ENCODE measurements at regions of chr1 and their contacts with region 1.

Region 1: DNA sequence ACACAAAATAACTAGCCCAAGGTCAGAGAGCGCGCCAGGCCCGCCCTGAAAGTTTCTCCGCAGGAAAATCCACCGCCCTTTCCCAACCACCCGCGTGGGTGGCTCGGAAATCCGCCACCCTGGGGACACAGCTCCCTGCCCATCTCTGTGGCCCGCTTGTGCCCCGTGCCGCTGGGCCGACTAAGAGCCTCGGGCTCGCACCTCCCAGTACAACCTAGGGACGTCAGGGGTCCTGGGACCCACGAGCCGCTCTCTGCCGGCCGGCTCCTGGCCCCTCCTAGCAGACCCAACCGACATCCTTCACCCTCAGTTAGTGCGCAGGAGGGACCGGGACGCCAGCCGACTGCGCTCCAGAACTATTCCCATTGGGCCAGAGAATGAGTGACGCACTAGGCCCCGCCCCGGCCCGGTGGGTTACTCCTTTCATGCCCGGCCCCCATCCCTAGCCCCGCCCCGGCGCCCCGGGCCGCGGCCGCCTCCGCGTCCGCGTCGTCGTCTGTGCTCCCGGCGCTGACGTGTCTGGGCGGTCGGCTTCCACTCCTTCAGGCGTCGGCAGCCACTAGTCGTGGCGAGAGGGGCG is 395 bp upstream of the UAP1 start:
- DNase-seq: peak; percentile 94 to 99 (median 98)
- ATAC-seq: peak; percentile 93
- H3K4me3 ChIP-seq: peak overlapping the region; percentile 70
- H3K4me3 Mint-ChIP-seq: peak overlapping the region; percentile 97
- H3K27ac ChIP-seq: peak overlapping the region; percentile 85 to 88
- H3K27ac Mint-ChIP-seq: peak overlapping the region; percentile 100
- H3K4me1 ChIP-seq: peaks cover 15% of the 10 kb centered on the region
- H3K4me1 Mint-ChIP-seq: peaks cover 54% of the 10 kb centered on the region
- H3K27me3 ChIP-seq: no peaks in the 10 kb centered on the region
- H3K27me3 Mint-ChIP-seq: no peaks in the 10 kb centered on the region
- CTCF ChIP-seq: no peak

Region 2: GRCh38 chr1:161766102-161766981 is 794.8 kb before region 1 on chr1 and contains the start of gene ATF6:
- CTCF ChIA-PET with region 1: no interaction called
- POLR2A ChIA-PET with region 1: no interaction called
- intact Hi-C with region 1: loop called in 1 of 2 experiments (anchors 10 kb)
- DNase-seq: peak; percentile 66 to 90 (median 74)
- ATAC-seq: peak; percentile 69
- H3K4me3 ChIP-seq: peak within 1 kb of the TSS; percentile 70
- H3K4me3 Mint-ChIP-seq: peak within 1 kb of the TSS; percentile 99
- H3K27ac ChIP-seq: peak within 1 kb of the TSS; percentile 76 to 86
- H3K27ac Mint-ChIP-seq: no peak within 1 kb of the TSS
- H3K4me1 ChIP-seq: peaks cover 29% of the 10 kb centered on the region
- H3K4me1 Mint-ChIP-seq: peaks cover 40% of the 10 kb centered on the region
- H3K27me3 ChIP-seq: no peaks in the 10 kb centered on the region
- H3K27me3 Mint-ChIP-seq: no peaks in the 10 kb centered on the region
- CTCF ChIP-seq: no peak
- total RNA-seq, gene ATF6: 16.2 to 17.1 TPM

Region 3: GRCh38 chr1:162444903-162445302 is 116.2 kb before region 1 on chr1:
- CTCF ChIA-PET with region 1: no interaction called
- POLR2A ChIA-PET with region 1: no interaction called
- intact Hi-C with region 1: no loop called
- DNase-seq: no peak
- ATAC-seq: no peak
- H3K4me3 ChIP-seq: no peak overlapping the region
- H3K4me3 Mint-ChIP-seq: no peak overlapping the region
- H3K27ac ChIP-seq: no peak overlapping the region
- H3K27ac Mint-ChIP-seq: no peak overlapping the region
- H3K4me1 ChIP-seq: no peaks in the 10 kb centered on the region
- H3K4me1 Mint-ChIP-seq: no peaks in the 10 kb centered on the region
- H3K27me3 ChIP-seq: peaks cover 9 to 23% of the 10 kb centered on the region in 2 experiments
- H3K27me3 Mint-ChIP-seq: peaks cover 75% of the 10 kb centered on the region
- CTCF ChIP-seq: no peak

Region 4: DNA sequence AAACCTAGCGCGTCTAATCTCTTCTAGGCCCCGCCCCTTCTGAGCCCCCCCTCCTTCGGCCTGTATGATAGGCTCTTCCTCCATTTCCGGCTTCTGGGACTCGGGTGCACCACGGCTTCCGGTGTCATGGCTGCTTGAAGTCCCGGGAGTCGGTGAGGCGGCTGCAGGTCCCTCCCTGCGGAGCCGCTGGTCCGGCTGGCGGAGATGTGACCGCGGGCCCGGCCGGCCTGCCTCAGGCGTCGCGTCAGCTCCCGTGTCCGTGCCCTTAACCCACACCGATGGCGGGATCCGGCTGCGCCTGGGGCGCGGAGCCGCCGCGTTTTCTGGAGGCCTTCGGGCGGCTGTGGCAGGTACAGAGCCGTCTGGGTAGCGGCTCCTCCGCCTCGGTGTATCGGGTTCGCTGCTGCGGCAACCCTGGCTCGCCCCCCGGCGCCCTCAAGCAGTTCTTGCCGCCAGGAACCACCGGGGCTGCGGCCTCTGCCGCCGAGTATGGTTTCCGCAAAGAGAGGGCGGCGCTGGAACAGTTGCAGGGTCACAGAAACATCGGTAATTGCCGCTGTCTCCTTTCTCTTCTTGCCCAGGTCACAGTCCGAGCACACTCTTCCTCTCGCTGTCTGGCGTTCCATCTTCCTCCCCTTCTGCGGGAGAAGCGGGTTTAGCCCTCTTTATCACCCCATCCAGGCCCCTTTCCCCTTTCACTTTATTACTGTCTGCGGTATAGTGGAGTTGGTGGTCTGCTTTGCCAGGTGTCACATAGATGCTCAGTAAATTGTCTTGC is 63.2 kb before region 1 on chr1 and contains the start of gene UHMK1:
- CTCF ChIA-PET with region 1: no interaction called
- POLR2A ChIA-PET with region 1: no interaction called
- intact Hi-C with region 1: loop called (anchors 1 kb)
- DNase-seq: peak; percentile 81 to 96 (median 87)
- ATAC-seq: peak; percentile 97
- H3K4me3 ChIP-seq: peak within 1 kb of the TSS; percentile 92
- H3K4me3 Mint-ChIP-seq: peak within 1 kb of the TSS; percentile 92
- H3K27ac ChIP-seq: peak within 1 kb of the TSS; percentile 29 to 79
- H3K27ac Mint-ChIP-seq: peak within 1 kb of the TSS; percentile 86
- H3K4me1 ChIP-seq: peaks cover 17% of the 10 kb centered on the region
- H3K4me1 Mint-ChIP-seq: peaks cover 40% of the 10 kb centered on the region
- H3K27me3 ChIP-seq: no peaks in the 10 kb centered on the region
- H3K27me3 Mint-ChIP-seq: no peaks in the 10 kb centered on the region
- CTCF ChIP-seq: no peak
- total RNA-seq, gene UHMK1: 47.3 to 47.6 TPM

Region 5: GRCh38 chr1:162538815-162539431 is 22.2 kb before region 1 on chr1:
- CTCF ChIA-PET with region 1: no interaction called
- POLR2A ChIA-PET with region 1: no interaction called
- intact Hi-C with region 1: no loop called
- DNase-seq: no peak
- ATAC-seq: no peak
- H3K4me3 ChIP-seq: no peak overlapping the region
- H3K4me3 Mint-ChIP-seq: no peak overlapping the region
- H3K27ac ChIP-seq: no peak overlapping the region
- H3K27ac Mint-ChIP-seq: no peak overlapping the region
- H3K4me1 ChIP-seq: no peaks in the 10 kb centered on the region
- H3K4me1 Mint-ChIP-seq: no peaks in the 10 kb centered on the region
- H3K27me3 ChIP-seq: no peaks in the 10 kb centered on the region
- H3K27me3 Mint-ChIP-seq: no peaks in the 10 kb centered on the region
- CTCF ChIP-seq: no peak

Region 6: GRCh38 chr1:162782671-162783070 is 221.5 kb after region 1 on chr1:
- CTCF ChIA-PET with region 1: no interaction called
- POLR2A ChIA-PET with region 1: no interaction called
- intact Hi-C with region 1: loop called in 1 of 2 experiments (anchors 10 kb)
- DNase-seq: no peak
- ATAC-seq: no peak
- H3K4me3 ChIP-seq: no peak overlapping the region
- H3K4me3 Mint-ChIP-seq: no peak overlapping the region
- H3K27ac ChIP-seq: no peak overlapping the region
- H3K27ac Mint-ChIP-seq: no peak overlapping the region
- H3K4me1 ChIP-seq: no peaks in the 10 kb centered on the region
- H3K4me1 Mint-ChIP-seq: no peaks in the 10 kb centered on the region
- H3K27me3 ChIP-seq: peaks cover 0 to 8% of the 10 kb centered on the region in 2 experiments
- H3K27me3 Mint-ChIP-seq: peaks cover 15% of the 10 kb centered on the region
- CTCF ChIP-seq: no peak

Region 7: GRCh38 chr1:163315773-163316374 is 754.7 kb after region 1 on chr1:
- CTCF ChIA-PET with region 1: no interaction called
- POLR2A ChIA-PET with region 1: no interaction called
- intact Hi-C with region 1: loop called (anchors 5 kb)
- DNase-seq: peak in 12 of 14 experiments; percentile 6 to 71 (median 26)
- ATAC-seq: no peak
- H3K4me3 ChIP-seq: no peak overlapping the region
- H3K4me3 Mint-ChIP-seq: no peak overlapping the region
- H3K27ac ChIP-seq: no peak overlapping the region
- H3K27ac Mint-ChIP-seq: no peak overlapping the region
- H3K4me1 ChIP-seq: peaks cover 2% of the 10 kb centered on the region
- H3K4me1 Mint-ChIP-seq: peaks cover 4% of the 10 kb centered on the region
- H3K27me3 ChIP-seq: no peaks in the 10 kb centered on the region
- H3K27me3 Mint-ChIP-seq: no peaks in the 10 kb centered on the region
- CTCF ChIP-seq: peak; percentile 68

Region 8: DNA sequence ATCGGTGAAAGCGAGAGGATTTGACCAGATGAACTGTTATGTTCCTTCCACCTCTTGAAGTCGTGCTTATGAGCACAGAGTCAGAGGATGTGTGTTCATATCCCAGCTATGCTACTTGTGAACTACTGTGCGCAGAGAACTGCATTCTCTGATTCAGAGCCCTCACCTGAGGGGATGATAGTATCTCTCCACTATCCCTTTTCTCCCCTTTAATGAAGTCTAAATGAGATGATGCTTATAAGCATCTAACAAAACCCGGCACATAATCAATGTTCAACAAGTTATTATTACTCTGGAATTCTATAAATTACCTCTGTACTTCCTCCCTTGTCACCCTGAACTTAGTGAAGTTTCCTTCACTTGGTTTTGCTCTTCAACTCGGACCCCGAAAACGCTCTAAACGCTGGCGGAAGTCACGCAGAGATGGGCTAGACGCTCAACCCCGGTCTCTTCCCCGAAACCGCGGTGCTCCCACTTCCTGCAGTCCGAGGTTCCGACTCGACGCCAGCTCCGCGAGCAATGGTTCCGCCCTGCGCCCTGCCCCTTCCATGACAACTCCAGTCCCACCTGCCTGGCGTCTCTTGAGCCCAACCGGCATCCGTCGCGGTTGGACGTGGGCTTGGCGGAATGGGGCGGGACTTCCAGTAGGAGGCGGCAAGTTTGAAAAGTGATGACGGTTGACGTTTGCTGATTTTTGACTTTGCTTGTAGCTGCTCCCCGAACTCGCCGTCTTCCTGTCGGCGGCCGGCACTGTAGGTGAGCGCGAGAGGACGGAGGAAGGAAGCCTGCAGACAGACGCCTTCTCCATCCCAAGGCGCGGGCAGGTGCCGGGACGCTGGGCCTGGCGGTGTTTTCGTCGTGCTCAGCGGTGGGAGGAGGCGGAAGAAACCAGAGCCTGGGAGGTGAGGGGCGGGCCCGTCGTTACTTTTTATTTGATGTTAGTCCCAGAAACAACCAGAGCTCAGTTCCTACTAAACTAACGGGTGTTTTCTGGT is 760.5 kb after region 1 on chr1 and contains the start of gene NUF2:
- CTCF ChIA-PET with region 1: no interaction called
- POLR2A ChIA-PET with region 1: interaction called, 3 read pairs
- intact Hi-C with region 1: loop called (anchors 5 kb)
- DNase-seq: peak; percentile 93 to 98 (median 96)
- ATAC-seq: peak; percentile 96
- H3K4me3 ChIP-seq: peak within 1 kb of the TSS; percentile 74
- H3K4me3 Mint-ChIP-seq: peak within 1 kb of the TSS; percentile 84
- H3K27ac ChIP-seq: peak within 1 kb of the TSS; percentile 53 to 55
- H3K27ac Mint-ChIP-seq: peak within 1 kb of the TSS; percentile 86
- H3K4me1 ChIP-seq: peaks cover 6% of the 10 kb centered on the region
- H3K4me1 Mint-ChIP-seq: peaks cover 23% of the 10 kb centered on the region
- H3K27me3 ChIP-seq: no peaks in the 10 kb centered on the region
- H3K27me3 Mint-ChIP-seq: no peaks in the 10 kb centered on the region
- CTCF ChIP-seq: no peak
- total RNA-seq, gene NUF2: 1.8 TPM

Region 9: DNA sequence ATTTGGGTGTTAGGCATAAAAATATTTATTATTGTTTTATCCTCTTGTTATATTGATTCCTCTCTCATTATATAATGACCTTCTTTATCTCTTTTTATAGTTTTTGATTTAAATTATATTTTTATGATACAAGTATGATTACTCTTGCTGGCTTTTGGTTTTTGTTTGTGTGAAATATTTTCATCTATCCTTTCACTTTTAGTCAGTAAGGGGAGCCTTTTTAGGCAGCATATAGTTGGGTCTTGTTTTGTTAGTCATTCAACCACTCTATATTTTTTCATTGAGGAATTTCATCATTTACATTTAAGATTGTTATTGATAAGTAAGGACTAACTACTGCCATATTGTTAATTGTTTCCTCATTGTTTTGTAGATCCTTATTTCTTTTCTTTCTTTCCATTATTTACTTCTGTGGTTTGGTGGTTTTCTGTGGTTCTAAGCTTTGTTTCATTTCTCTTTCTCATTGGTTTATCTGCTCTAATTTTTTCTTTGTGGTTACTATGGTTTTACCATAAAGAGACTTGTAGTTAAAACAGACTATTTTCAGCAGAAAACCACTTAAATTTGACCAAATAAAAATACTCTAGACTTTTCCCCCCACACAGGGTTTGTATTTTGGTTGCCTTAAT is 1353.8 kb after region 1 on chr1:
- CTCF ChIA-PET with region 1: no interaction called
- POLR2A ChIA-PET with region 1: no interaction called
- intact Hi-C with region 1: no loop called
- DNase-seq: no peak
- ATAC-seq: no peak
- H3K4me3 ChIP-seq: no peak overlapping the region
- H3K4me3 Mint-ChIP-seq: no peak overlapping the region
- H3K27ac ChIP-seq: no peak overlapping the region
- H3K27ac Mint-ChIP-seq: no peak overlapping the region
- H3K4me1 ChIP-seq: no peaks in the 10 kb centered on the region
- H3K4me1 Mint-ChIP-seq: no peaks in the 10 kb centered on the region
- H3K27me3 ChIP-seq: no peaks in the 10 kb centered on the region
- H3K27me3 Mint-ChIP-seq: no peaks in the 10 kb centered on the region
- CTCF ChIP-seq: no peak